Sigmoid colon (tissue), 7 donors: ENCODE measurements at regions of chr15 and their contacts with region 1.

Region 1: DNA sequence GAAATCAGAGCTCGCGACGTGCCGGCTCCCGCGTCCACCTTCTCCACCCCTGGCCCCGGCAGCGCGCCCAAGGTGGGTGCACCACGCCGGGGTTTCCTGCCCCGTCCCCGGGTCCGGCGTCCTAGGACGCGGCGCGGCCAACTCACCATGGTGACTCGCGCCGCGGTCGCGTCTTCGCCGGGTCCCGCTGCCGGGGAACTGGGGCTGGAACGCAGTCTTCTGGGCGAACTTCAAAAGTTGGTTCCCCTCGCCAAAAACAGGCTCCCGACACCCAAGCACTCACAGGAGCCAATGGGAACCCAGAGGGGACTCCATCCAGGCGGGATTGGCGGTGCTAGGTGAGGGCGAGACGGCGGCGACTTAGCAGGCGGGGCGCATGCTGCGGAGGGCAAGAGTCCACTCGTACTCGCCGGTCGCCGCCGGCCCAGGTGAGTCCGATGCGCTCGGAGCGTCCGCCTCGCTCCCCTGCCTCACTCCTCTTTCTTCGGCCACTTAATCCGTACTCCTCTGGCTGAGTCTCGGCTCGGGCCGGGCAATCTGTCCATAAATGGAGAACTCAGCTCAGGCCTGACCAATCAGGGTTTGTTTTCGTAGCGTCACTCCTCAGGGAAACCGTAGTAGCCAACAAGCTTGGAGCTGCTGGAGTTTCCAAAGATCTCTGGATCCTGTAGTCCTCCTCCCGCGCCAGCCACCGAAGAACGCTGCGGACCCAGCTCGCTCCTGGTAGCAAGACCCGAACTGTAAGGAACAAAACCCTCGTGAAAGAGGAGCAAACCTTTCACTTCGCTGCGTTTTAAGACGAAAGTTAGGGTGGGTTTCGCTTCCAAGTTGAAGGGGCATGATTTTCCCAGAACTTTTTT is at the start of gene MYO1E:
- DNase-seq: peak; percentile 97
- H3K4me3 ChIP-seq: peak within 1 kb of the TSS; percentile 66 to 94 (median 87)
- H3K27ac ChIP-seq: peak within 1 kb of the TSS; percentile 94 to 98 (median 97)
- H3K4me1 ChIP-seq: peaks cover 0 to 16% (median 13%) of the 10 kb centered on the region in 4 donors
- H3K27me3 ChIP-seq: no peaks in the 10 kb centered on the region
- CTCF ChIP-seq: no peak
- EP300 ChIP-seq: peak in 1 of 4 donors; percentile 18
- POLR2A ChIP-seq: peak; percentile 64 to 89
- total RNA-seq, gene MYO1E: 20.6 to 32.1 (median 22.9) TPM

Region 2: DNA sequence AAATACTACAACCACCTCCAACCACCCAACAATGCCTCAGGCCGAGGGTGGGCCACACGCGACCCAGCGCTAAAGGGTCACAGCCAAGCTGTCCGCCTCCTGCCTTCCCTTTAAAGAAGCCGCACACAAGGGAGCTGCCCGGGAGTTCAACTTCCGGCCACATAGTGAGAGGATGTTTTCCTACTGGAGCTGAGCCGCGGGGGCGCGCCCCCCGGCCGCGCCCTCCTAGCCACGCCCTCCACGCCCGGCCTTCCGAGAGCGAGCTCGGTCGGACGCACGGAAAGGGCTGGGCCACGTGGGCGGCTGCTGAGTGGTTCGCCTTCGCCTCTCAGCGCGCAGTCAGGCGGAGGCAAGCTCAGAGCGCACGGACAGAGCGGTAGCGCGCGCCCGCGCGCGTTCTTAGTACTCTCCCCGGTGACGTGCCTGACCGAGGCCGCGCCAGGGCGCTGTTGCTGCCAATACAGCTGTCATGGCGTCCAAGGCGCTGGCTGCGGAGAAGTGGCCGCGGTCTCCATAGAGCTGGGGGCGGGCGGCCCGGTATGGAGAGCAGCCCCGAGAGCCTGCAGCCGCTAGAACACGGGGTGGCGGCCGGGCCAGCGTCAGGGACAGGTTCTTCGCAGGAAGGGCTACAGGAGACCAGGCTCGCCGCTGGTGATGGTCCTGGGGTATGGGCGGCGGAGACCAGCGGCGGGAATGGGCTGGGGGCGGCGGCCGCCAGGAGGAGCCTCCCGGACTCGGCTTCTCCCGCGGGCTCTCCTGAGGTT is 601.5 kb before region 1 on chr15 and contains the start of gene MINDY2:
- intact Hi-C with region 1: loop called (anchors 10 kb)
- DNase-seq: peak; percentile 99
- H3K4me3 ChIP-seq: peak within 1 kb of the TSS; percentile 71 to 86 (median 84)
- H3K27ac ChIP-seq: peak within 1 kb of the TSS; percentile 93 to 99 (median 96)
- H3K4me1 ChIP-seq: peaks cover 0 to 42% (median 37%) of the 10 kb centered on the region in 4 donors
- H3K27me3 ChIP-seq: no peaks in the 10 kb centered on the region
- CTCF ChIP-seq: peak in 1 of 4 experiments; percentile 33
- EP300 ChIP-seq: no peak
- POLR2A ChIP-seq: peak; percentile 59 to 88
- total RNA-seq, gene MINDY2: 18.0 to 28.5 (median 21.2) TPM

Region 3: GRCh38 chr15:59116141-59116540 is 256.4 kb before region 1 on chr15:
- intact Hi-C with region 1: no loop called
- DNase-seq: no peak
- H3K4me3 ChIP-seq: no peak overlapping the region
- H3K27ac ChIP-seq: no peak overlapping the region
- H3K4me1 ChIP-seq: no peaks in the 10 kb centered on the region
- H3K27me3 ChIP-seq: no peaks in the 10 kb centered on the region
- CTCF ChIP-seq: no peak
- EP300 ChIP-seq: no peak
- POLR2A ChIP-seq: no peak

Region 4: DNA sequence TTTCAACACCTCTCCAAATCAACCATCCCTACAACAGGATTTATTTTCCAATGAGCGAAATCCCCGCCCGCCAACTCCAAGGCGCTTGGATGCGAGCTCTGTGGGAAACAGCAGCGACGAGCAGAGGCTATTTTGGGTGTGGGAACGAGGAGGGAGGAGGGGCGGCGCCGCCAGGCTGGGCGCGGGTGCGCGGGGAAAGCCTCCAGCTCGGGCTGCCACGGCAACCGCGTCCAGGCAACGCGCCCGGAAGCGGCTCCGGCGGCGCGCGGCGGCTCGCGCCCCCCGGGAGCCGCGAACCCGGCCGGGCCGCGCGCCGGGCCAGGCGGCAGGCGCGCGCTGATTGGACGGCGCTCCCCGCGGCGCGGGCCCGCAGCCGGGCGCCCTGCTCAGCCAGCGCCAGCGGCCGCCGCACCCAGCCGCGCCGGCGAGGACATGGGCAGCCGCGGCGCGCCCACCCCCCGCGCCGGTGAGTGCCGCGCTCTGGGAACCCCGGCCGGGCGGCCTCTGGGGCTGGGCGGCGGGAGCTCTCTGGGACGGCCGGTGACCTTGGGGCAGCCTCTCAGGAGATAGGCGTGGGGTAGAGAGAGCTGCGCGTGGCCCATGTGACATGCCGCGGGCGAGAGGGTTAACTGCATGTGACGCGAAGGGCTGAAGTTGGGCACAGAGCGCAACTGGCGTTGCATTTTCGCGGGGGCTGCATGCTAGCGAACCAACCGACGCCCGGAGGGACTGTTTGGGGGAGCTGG is 65.4 kb after region 1 on chr15 and contains the start of gene FAM81A:
- intact Hi-C with region 1: loop called (anchors 1 kb)
- DNase-seq: peak; percentile 94
- H3K4me3 ChIP-seq: peak within 1 kb of the TSS; percentile 33 to 59 (median 52)
- H3K27ac ChIP-seq: peak within 1 kb of the TSS in 3 of 4 donors; percentile 27 to 58 (median 30)
- H3K4me1 ChIP-seq: peaks cover 0 to 17% (median 16%) of the 10 kb centered on the region in 4 donors
- H3K27me3 ChIP-seq: no peaks in the 10 kb centered on the region
- CTCF ChIP-seq: no peak
- EP300 ChIP-seq: no peak
- POLR2A ChIP-seq: no peak
- total RNA-seq, gene FAM81A: 1.8 to 4.7 (median 2.1) TPM in 3 of 4 donors, not detected in the other